CD8-positive, alpha-beta T cell (primary cell): ENCODE measurements at regions of chr7 and their contacts with region 1.

Region 1: DNA sequence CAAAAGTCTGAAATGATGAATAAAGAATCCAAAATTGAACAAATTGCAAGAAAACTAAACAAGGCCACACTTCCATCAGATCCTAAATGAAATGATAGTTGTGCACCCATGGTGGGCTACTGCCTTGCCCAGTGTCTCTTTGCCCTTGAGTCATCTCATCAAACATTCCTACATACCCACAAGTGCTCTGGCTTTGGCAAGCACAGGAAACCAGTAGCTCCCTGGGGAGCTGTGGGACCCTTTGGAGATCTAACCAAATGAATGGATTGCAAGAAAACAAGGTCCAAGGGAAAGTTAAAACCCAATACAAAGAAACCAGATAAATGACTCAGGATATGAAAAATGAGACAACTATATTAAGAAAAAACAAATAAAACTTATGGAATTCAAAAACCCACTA is 129.8 kb upstream of the TMEM229A start:
- DNase-seq: no peak
- ATAC-seq: no peak
- H3K4me3 ChIP-seq: no peak overlapping the region
- H3K4me3 Mint-ChIP-seq: no peak overlapping the region
- H3K27ac ChIP-seq: no peak overlapping the region
- H3K27ac Mint-ChIP-seq: no peak overlapping the region
- H3K4me1 ChIP-seq: no peaks in the 10 kb centered on the region
- H3K4me1 Mint-ChIP-seq: no peaks in the 10 kb centered on the region
- H3K27me3 ChIP-seq: no peaks in the 10 kb centered on the region
- H3K27me3 Mint-ChIP-seq: no peaks in the 10 kb centered on the region
- CTCF ChIP-seq: no peak

Region 2: GRCh38 chr7:124124201-124124600 is 38.5 kb before region 1 on chr7:
- CTCF ChIA-PET with region 1: no interaction called
- POLR2A ChIA-PET with region 1: no interaction called
- intact Hi-C with region 1: loop called in 1 of 2 experiments (anchors 1 kb)
- DNase-seq: no peak
- ATAC-seq: no peak
- H3K4me3 ChIP-seq: no peak overlapping the region
- H3K4me3 Mint-ChIP-seq: no peak overlapping the region
- H3K27ac ChIP-seq: no peak overlapping the region
- H3K27ac Mint-ChIP-seq: no peak overlapping the region
- H3K4me1 ChIP-seq: no peaks in the 10 kb centered on the region
- H3K4me1 Mint-ChIP-seq: no peaks in the 10 kb centered on the region
- H3K27me3 ChIP-seq: no peaks in the 10 kb centered on the region
- H3K27me3 Mint-ChIP-seq: no peaks in the 10 kb centered on the region
- CTCF ChIP-seq: no peak

Region 3: GRCh38 chr7:124351950-124352349 is 189.3 kb after region 1 on chr7:
- CTCF ChIA-PET with region 1: no interaction called
- POLR2A ChIA-PET with region 1: no interaction called
- intact Hi-C with region 1: no loop called
- DNase-seq: no peak
- ATAC-seq: no peak
- H3K4me3 ChIP-seq: no peak overlapping the region
- H3K4me3 Mint-ChIP-seq: no peak overlapping the region
- H3K27ac ChIP-seq: no peak overlapping the region
- H3K27ac Mint-ChIP-seq: no peak overlapping the region
- H3K4me1 ChIP-seq: no peaks in the 10 kb centered on the region
- H3K4me1 Mint-ChIP-seq: no peaks in the 10 kb centered on the region
- H3K27me3 ChIP-seq: no peaks in the 10 kb centered on the region
- H3K27me3 Mint-ChIP-seq: no peaks in the 10 kb centered on the region
- CTCF ChIP-seq: no peak